SK-N-SH (cell line): ENCODE measurements at regions of chr17 and their contacts with region 1.

Region 1: GRCh38 chr17:50841949-50842354 is 6.6 kb downstream of the WFIKKN2 start:
- DNase-seq: peak; percentile 97
- H3K4me3 ChIP-seq: no peak overlapping the region; a peak in 1 of 4 replicates
- H3K27ac ChIP-seq: no peak overlapping the region
- H3K4me1 ChIP-seq: peaks cover 3 to 5% of the 10 kb centered on the region in 2 experiments; a peak in 2 of 4 replicates
- H3K27me3 ChIP-seq: no peaks in the 10 kb centered on the region
- CTCF ChIP-seq: peak; percentile 94
- EP300 ChIP-seq: no peak
- RAD21 ChIP-seq: peak; percentile 93

Region 2: GRCh38 chr17:50765454-50766221 is 76.3 kb before region 1 on chr17:
- CTCF ChIA-PET with region 1: interaction called, 10 read pairs
- POLR2A ChIA-PET with region 1: no interaction called
- DNase-seq: no peak
- H3K4me3 ChIP-seq: no peak overlapping the region
- H3K27ac ChIP-seq: peak overlapping the region in 1 of 2 experiments; percentile 7; a peak in 1 of 4 replicates
- H3K4me1 ChIP-seq: peaks cover 0 to 24% of the 10 kb centered on the region in 2 experiments; a peak in 2 of 4 replicates
- H3K27me3 ChIP-seq: no peaks in the 10 kb centered on the region
- CTCF ChIP-seq: no peak
- EP300 ChIP-seq: no peak
- RAD21 ChIP-seq: no peak

Region 3: GRCh38 chr17:50806141-50806643 is 35.8 kb before region 1 on chr17:
- CTCF ChIA-PET with region 1: interaction called, 45 read pairs
- POLR2A ChIA-PET with region 1: no interaction called
- DNase-seq: no peak
- H3K4me3 ChIP-seq: no peak overlapping the region
- H3K27ac ChIP-seq: no peak overlapping the region
- H3K4me1 ChIP-seq: no peaks in the 10 kb centered on the region
- H3K27me3 ChIP-seq: no peaks in the 10 kb centered on the region
- CTCF ChIP-seq: peak; percentile 48
- EP300 ChIP-seq: no peak
- RAD21 ChIP-seq: no peak

Region 4: DNA sequence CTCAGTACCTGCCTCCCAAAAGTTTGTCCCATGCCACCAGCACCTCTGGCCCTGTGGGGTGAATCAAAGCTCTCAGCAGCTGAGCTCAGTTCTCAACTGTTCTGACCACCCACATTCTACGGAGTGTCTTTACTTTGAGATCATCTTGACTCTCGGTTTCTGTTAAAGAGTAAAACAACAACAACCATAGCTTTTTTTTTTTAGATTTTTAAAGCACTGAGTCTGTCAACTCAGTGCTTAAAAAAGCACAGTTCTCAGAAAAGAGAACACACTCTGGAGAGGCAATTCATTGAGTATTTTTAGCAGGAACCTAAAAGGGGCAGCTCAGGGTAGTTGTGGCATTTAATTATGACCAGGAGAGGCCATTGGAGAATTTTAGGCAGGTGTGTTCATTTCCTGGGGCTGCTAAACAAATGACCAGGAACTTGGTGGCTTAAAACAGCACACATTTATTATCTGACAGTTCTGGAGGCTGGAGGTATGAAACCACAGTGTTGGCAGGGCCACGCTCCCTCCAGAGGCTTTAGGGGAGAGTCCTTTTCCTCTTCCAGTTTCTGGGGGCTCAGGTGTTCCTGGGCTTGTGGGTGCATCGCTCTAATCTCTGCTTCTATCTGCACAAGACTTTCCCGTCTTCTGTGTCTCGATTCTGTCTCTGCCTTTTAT is 13.3 kb before region 1 on chr17:
- CTCF ChIA-PET with region 1: interaction called, 13 read pairs
- POLR2A ChIA-PET with region 1: no interaction called
- DNase-seq: no peak
- H3K4me3 ChIP-seq: no peak overlapping the region
- H3K27ac ChIP-seq: no peak overlapping the region
- H3K4me1 ChIP-seq: peaks cover 0 to 4% of the 10 kb centered on the region in 2 experiments; a peak in 1 of 4 replicates
- H3K27me3 ChIP-seq: peaks cover 12% of the 10 kb centered on the region; the same call in 1 of the 2 replicates
- CTCF ChIP-seq: no peak
- EP300 ChIP-seq: no peak
- RAD21 ChIP-seq: no peak

Region 5: GRCh38 chr17:50931144-50931908 is 89.4 kb after region 1 on chr17:
- CTCF ChIA-PET with region 1: no interaction called
- POLR2A ChIA-PET with region 1: no interaction called
- DNase-seq: peak; percentile 95
- H3K4me3 ChIP-seq: peak overlapping the region; percentile 41 to 62
- H3K27ac ChIP-seq: peak overlapping the region; percentile 93 to 98
- H3K4me1 ChIP-seq: peaks cover 15 to 41% of the 10 kb centered on the region in 2 experiments
- H3K27me3 ChIP-seq: no peaks in the 10 kb centered on the region
- CTCF ChIP-seq: no peak
- EP300 ChIP-seq: peak in 1 of 2 experiments; percentile 45; a peak in 1 of 4 replicates
- RAD21 ChIP-seq: no peak; the same call in 1 of the 2 replicates

Region 6: DNA sequence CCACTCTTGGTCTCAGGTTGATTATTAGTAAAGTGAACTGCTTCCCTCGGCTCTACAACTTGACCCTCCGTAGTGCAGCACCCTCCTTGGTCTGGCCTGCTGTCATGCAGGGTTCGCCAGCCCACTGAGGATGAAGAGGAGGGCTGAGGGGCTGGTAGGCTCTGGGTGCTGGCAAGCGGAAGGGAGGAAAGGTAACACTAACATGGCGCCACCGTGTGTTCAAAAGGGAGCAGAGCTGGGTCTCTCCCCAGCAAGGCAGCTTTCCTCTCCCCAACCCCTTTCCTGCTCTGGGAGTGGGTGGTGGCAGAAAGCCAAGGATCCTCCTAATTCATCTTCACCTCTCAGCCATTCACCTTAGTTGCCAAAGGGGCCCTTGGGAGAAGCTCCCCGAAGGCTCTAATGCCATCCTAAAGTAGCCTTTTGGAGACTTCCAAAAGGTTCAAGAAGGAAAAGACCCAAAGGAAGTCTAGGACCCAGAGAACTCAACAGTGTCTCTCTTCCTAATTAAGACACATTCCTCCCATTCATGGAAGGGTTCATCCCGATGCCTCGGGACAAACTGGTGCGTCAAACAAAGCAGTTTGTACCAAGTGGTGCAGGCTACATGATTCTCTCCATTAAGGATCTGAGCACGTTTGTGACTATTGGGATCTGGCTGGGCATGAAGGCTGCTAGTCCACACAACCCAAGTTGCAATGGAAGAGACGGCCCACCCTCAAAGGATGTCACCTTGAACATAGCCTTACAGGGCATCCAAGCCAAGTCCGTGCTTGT is 115.0 kb after region 1 on chr17:
- CTCF ChIA-PET with region 1: interaction called, 820 read pairs
- POLR2A ChIA-PET with region 1: interaction called, 3 read pairs
- DNase-seq: peak; percentile 75
- H3K4me3 ChIP-seq: no peak overlapping the region; a peak in 1 of 4 replicates
- H3K27ac ChIP-seq: peak overlapping the region in 1 of 2 experiments; percentile 39; a peak in 1 of 4 replicates
- H3K4me1 ChIP-seq: peaks cover 16 to 55% of the 10 kb centered on the region in 2 experiments
- H3K27me3 ChIP-seq: no peaks in the 10 kb centered on the region
- CTCF ChIP-seq: peak; percentile 90
- EP300 ChIP-seq: no peak
- RAD21 ChIP-seq: peak; percentile 89